ENCODE measurements at regions of chr4 and their contacts with region 1.

Region 1: DNA sequence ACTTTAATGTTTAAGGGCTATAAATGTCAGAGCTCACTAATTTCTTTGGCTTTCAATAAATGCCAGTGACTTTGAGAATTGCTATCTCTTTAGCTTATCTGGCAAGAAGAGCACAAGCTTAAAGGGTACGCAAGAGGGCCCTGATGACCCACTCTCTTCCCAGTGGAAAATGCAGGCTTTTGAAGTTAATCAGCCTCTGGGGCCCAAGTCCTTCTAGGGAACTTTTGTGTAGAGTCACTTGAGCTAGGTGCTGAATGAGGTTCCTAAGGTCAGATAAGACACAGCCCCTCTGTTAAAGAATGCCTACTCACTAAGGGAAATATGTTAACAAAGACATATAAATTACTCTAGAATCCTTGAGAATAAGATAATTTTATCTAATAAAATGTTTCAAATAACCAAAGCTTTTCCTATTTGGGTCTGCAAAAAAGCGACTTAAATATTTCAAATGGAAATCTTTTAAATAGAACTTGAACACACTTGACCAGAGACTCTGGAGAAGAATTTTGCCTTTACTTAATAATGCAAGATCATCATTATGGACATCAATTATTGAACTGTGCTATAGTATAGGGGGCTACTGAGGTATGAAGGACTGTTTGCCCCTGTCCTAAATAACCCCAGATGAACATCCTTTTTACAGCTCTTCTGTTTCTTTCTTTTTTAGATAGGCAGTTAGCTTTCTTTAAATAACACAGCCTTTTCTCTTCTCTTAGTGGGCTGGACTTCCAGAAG is 430.1 kb downstream of the GBA3 start:
- DNase-seq: no peak
- H3K4me3 ChIP-seq: no peak overlapping the region
- H3K27ac ChIP-seq: no peak overlapping the region
- H3K4me1 ChIP-seq: no peaks in the 10 kb centered on the region
- H3K27me3 ChIP-seq: no peaks in the 10 kb centered on the region
- CTCF ChIP-seq: no peak
- EP300 ChIP-seq: no peak
- RAD21 ChIP-seq: no peak

Region 2: DNA sequence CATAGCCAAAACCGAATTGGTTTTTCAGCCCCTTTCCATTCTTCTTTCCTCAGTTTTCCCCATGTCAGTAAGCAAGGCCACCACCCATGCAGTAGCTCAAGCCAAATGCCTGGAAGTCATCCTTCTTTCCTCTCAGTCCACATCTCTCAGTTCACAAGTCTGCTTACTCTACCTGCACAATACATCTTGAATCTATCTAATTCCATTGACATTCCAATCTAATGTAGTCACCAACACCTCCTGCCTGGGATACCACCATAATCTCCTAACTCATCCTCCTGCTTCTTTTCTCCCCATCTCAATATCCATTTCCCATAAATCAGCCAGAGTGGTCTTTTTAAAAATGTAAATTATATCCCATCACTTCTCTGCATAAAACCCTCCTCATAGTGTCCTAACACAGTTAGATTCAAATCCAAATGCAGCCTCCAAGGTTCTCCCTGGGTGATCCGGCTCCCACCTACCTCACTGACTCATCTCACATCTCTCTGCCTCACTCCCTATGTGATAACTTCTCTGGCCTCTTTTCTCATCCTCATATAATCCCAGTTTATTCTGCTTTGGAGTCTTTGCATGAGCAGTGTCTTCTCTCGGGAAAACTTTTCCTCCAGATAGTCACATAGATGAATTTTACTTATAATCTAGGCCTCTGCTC is 1201.2 kb before region 1 on chr4:
- CTCF ChIA-PET with region 1: no interaction called
- POLR2A ChIA-PET with region 1: no interaction called
- DNase-seq: no peak
- H3K4me3 ChIP-seq: no peak overlapping the region
- H3K27ac ChIP-seq: no peak overlapping the region
- H3K4me1 ChIP-seq: no peaks in the 10 kb centered on the region
- H3K27me3 ChIP-seq: no peaks in the 10 kb centered on the region; the same call in 1 of the 2 replicates
- CTCF ChIP-seq: no peak
- EP300 ChIP-seq: no peak
- RAD21 ChIP-seq: no peak

Region 3: GRCh38 chr4:23135792-23136645 is 13.2 kb after region 1 on chr4:
- CTCF ChIA-PET with region 1: interaction called, 15 read pairs
- POLR2A ChIA-PET with region 1: no interaction called
- DNase-seq: peak; percentile 24
- H3K4me3 ChIP-seq: no peak overlapping the region; a peak in 1 of 4 replicates
- H3K27ac ChIP-seq: no peak overlapping the region
- H3K4me1 ChIP-seq: no peaks in the 10 kb centered on the region
- H3K27me3 ChIP-seq: no peaks in the 10 kb centered on the region
- CTCF ChIP-seq: peak; percentile 81
- EP300 ChIP-seq: no peak
- RAD21 ChIP-seq: peak; percentile 54